ENCODE measurements at regions of chr9 and their contacts with region 1.

Region 1: DNA sequence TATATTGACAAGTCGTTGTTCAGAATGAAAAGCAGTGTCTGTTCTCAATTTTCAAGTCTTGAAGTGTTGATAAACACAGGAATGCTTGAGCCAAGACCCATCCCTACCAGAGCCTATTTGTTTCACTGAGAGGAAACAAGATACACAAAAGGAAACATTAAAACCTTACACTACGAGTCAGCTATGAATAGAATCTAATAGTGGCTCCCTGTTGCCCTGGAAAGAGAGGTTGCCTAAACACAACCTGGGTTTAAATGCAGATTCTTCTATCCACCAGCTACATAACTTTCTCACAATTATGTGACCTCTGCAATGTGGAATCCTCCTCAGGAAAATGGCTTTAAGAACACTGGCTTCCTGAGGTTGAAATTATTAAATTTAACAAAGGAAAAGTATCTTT is 29.1 kb upstream of the BNC2 start:
- DNase-seq: no peak
- ATAC-seq: no peak
- H3K4me3 ChIP-seq: no peak overlapping the region
- H3K27ac ChIP-seq: no peak overlapping the region
- H3K4me1 ChIP-seq: no peaks in the 10 kb centered on the region
- H3K27me3 ChIP-seq: no peaks in the 10 kb centered on the region
- CTCF ChIP-seq: no peak
- POLR2A ChIP-seq: no peak

Region 2: DNA sequence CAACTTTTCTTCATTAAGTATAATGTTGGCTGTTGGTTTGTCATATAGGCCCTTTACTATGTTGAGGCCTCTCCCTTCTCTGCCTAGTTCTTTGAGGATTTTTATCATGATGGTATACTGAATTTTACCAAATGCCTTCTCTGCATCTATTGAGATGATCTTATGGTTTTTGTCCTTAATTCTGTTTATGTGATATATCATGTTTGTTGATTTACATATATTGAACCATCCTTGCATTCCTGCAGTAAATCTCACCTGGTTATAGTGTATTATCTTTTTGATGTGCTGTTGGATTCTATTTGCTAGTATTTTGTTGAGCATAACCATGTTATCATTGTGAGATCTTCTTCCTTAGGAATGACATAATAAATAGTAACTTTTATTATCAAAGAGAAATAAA is 983.9 kb before region 1 on chr9:
- in situ Hi-C with region 1: no loop called
- intact Hi-C with region 1: loop called (anchors 5 kb)
- DNase-seq: no peak
- ATAC-seq: no peak
- H3K4me3 ChIP-seq: no peak overlapping the region
- H3K27ac ChIP-seq: no peak overlapping the region
- H3K4me1 ChIP-seq: no peaks in the 10 kb centered on the region
- H3K27me3 ChIP-seq: no peaks in the 10 kb centered on the region
- CTCF ChIP-seq: no peak
- POLR2A ChIP-seq: no peak